Prostate gland (tissue), 2 donors: ENCODE measurements at regions of chr17 and their contacts with region 1.

Region 1: DNA sequence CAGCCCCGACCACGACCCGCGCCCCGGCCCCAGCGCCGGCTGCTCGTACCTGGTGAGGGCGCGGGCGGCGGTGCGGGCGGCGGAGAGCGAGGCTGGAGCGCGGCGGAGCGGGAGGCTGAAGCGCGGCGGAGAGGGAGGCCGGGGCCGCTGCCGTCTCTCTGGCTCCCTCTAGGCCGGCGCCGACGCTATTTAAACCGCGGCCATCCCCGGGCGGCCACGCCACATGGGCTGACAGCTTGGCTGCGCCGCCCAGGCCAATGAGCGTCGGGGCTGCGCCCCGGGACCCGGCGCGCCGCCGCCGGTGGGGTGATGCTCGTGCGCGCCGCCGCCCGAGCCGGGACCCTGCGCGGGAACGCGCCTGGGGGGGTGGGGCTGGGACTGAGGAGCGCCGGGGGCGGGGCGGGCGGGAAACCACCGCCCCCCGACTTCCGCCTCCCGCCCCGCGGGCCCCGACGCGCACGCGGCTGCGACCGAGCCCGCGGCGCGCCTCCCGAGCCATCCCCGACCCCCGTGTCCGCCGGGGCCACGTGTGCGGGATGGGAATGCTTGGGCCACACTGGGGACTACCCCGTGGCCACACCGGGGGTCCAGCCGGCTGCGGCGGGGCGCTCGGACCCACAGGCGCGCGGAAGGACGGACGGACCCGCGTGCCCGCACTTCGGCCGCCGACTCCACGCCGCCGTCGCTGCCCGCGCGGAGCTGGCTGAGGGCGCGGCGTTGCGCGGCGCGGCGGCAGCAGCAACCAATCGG is at the start of gene FASN:
- DNase-seq: peak; percentile 92
- H3K4me3 ChIP-seq: peak within 1 kb of the TSS; percentile 91 to 98
- H3K27ac ChIP-seq: peak within 1 kb of the TSS; percentile 98 to 99
- H3K4me1 ChIP-seq: peaks cover 35% of the 10 kb centered on the region
- H3K27me3 ChIP-seq: no peaks in the 10 kb centered on the region
- CTCF ChIP-seq: peak in 2 of 4 experiments; percentile 49 to 62
- POLR2A ChIP-seq: peak; percentile 99
- total RNA-seq, gene FASN: 192 to 388 TPM

Region 2: GRCh38 chr17:81636505-81637288 is 461.6 kb before region 1 on chr17 and contains the starts of genes NPLOC4 and TSPAN10:
- intact Hi-C with region 1: no loop called
- DNase-seq: peak; percentile 66
- H3K4me3 ChIP-seq: peak within 1 kb of the TSS; percentile 85 to 90
- H3K27ac ChIP-seq: peak within 1 kb of the TSS; percentile 77 to 85
- H3K4me1 ChIP-seq: peaks cover 5% of the 10 kb centered on the region
- H3K27me3 ChIP-seq: no peaks in the 10 kb centered on the region
- CTCF ChIP-seq: peak in 1 of 4 experiments; percentile 24
- POLR2A ChIP-seq: peak; percentile 66
- total RNA-seq, gene NPLOC4: 40.1 to 84.8 TPM
- total RNA-seq, gene TSPAN10: 2.5 to 2.9 TPM

Region 3: DNA sequence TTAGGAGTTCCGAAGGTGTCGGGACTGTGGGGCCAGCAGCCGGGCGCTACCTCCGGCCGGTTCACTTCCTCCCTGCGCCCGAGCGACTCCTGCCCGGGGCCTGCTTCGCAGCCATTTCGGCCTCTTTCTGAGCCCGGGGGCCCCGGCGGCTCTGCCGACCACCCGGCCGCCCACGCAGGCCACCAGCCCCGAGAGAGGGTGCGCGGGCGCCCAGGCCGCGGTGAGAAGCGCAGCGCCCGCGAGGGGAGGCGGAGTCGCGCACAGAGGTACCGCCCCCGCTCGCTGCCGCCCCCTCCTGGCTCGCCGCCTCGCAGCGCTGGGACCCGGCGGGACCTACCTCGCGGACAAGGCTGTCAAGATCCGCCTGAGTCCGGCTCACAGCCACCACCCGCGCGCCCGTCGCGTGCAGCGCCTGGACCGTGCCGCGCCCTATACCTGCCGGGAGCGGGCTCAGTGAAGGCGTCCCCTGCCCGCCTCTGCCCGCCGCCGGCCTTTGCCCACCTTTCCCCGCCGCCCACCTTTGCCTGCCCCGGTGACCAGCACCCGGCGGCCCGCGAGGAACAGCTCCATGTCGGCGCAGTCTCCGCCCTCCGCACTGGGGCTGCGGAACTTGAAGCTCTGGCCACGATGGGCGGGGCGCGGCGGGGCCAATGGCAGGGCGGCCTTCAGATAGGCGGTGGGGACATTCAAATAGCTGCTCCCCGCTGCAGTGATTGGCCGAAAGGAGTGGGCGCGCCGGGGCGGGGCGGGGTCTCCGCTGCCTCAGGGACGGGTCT is 60.9 kb before region 1 on chr17 and contains the start of gene DCXR:
- intact Hi-C with region 1: loop called (anchors 5 kb)
- DNase-seq: peak; percentile 98
- H3K4me3 ChIP-seq: peak within 1 kb of the TSS; percentile 72 to 81
- H3K27ac ChIP-seq: peak within 1 kb of the TSS; percentile 96 to 99
- H3K4me1 ChIP-seq: peaks cover 13% of the 10 kb centered on the region
- H3K27me3 ChIP-seq: no peaks in the 10 kb centered on the region
- CTCF ChIP-seq: peak; percentile 66 to 94 (median 82)
- POLR2A ChIP-seq: peak; percentile 95
- total RNA-seq, gene DCXR: 235 to 744 TPM